Sciatic nerve (tissue), 2 donors: ENCODE measurements at regions of chr2 and their contacts with region 1.

Region 1: GRCh38 chr2:144924827-144925226 is 404.9 kb upstream of the ZEB2 start:
- DNase-seq: no peak
- ATAC-seq: no peak

Region 2: GRCh38 chr2:144505245-144505831 is 419.5 kb before region 1 on chr2:
- intact Hi-C with region 1: loop called (anchors 5 kb)
- DNase-seq: no peak
- ATAC-seq: peak; percentile 71

Region 3: DNA sequence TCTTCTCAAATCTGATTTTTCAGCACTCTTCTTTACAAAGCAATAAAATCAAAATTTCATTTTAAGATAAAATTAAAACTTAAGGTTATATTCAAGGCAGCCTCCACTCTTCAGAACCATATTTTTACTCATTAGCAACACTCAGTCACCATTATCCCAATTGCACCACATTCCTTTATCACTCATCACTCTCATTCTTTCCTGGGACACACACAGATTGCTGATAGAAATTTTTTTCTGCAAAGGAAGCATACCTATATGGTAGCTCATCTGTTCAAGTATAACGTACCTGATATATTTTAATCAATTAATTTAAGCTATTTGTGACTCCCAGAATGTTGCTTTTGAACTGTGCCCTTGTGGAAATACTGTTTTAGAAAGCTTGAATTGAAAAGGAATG is 1154.4 kb after region 1 on chr2:
- intact Hi-C with region 1: no loop called
- DNase-seq: no peak
- ATAC-seq: no peak